ENCODE measurements at regions of chr2 and their contacts with region 1.

Region 1: DNA sequence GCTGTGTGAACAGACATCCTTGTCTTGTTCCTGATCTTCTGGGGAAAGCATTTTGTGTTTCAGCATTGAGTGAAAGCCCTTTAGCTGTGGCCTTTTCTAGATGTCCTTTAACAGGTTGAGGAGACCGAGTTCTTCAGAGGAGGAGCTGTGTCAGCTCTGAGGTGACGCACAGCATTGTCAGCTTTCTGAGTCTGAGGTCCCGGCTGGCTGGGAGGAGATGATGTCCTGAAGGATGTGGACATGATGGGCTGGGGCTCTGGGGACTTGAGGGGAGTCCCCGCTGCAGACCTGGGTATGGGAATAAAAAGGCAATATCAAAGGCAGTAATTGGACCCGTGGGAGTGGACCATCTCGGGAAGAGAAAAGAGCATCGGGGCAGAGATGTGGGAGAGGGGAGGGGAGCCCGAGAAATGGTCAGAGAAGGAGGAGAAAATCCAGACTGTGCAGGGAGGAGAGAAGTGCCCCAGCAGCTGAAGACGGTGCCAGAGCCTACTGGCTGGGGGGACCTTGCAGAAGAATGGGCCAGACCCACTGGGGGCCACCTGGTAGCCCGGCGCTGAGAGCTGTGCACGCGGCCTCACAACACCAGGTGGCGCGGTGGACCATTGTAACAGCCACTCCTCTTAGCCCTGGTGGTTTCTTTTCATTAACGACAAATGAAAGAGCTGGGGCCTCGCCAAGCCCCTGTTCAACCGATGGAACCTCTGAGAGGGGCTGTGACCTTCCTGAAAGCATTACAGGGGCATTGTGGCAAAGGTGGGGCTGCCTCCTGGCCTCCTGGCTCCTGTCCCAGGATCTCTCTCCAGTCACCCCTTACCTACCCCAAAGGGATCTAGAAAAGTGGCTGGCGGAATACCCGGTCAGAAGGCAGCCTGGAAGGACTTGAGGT is 61.6 kb downstream of the ST3GAL5 start:
- DNase-seq: no peak
- ATAC-seq: peak; percentile 98
- H3K4me3 ChIP-seq: no peak overlapping the region
- H3K27ac ChIP-seq: no peak overlapping the region
- H3K4me1 ChIP-seq: no peaks in the 10 kb centered on the region
- H3K27me3 ChIP-seq: no peaks in the 10 kb centered on the region; a peak in 1 of 4 replicates
- CTCF ChIP-seq: peak; percentile 77 to 89 (median 88); a peak in 5 of 6 replicates
- EP300 ChIP-seq: no peak
- POLR2A ChIP-seq: no peak
- RAD21 ChIP-seq: peak; percentile 85

Region 2: GRCh38 chr2:85437488-85438284 is 389.5 kb before region 1 on chr2:
- CTCF ChIA-PET with region 1: no interaction called
- POLR2A ChIA-PET with region 1: no interaction called
- RAD21 ChIA-PET with region 1: no interaction called
- SMC1A ChIA-PET with region 1: no interaction called
- in situ Hi-C with region 1: no loop called
- intact Hi-C with region 1: no loop called
- DNase-seq: no peak
- ATAC-seq: peak; percentile 94
- H3K4me3 ChIP-seq: peak overlapping the region; percentile 57; the same call in 1 of the 2 replicates
- H3K27ac ChIP-seq: no peak overlapping the region
- H3K4me1 ChIP-seq: peaks cover 8% of the 10 kb centered on the region; the same call in 1 of the 2 replicates
- H3K27me3 ChIP-seq: no peaks in the 10 kb centered on the region
- CTCF ChIP-seq: no peak
- EP300 ChIP-seq: peak in 1 of 2 experiments; percentile 21; a peak in 1 of 4 replicates
- POLR2A ChIP-seq: peak; percentile 88
- RAD21 ChIP-seq: no peak

Region 3: DNA sequence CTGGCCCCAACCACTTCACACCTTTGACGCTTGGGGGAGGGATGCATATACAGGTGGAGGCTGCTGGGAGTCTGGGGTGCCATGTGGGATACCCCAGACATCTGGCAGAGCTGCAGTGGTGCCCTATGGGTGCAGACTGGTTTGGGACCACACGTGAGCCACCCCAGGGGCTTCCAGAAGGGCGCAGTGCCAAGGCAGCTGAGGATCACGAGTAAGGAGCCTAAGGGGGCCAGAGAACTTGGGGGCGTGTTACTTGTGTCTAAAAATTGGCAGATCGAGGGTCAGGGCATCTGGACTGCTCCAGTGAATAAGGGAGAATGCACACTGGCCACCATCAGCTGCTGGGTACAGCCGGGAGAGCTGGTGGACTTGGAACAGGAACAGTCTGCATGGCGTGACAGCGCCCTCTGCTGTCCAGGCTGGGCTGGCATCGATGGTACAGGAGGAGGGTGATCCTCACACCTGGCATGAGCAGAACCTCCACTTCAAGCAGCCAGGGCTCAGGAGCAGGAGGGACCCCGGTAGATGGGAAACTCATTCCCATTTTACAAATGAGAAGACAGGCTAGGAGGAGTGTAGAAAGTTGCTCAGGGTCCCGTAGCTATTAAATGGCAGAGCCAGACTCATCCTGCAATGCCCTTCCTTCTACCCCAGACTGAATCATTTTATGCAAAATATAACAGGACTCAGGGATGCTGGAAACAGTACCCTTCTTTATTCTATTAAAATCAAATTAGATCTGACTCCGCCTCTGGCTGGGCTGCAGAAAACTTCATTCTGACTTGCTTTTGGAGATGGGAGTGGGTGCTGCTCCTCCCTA is 13.0 kb before region 1 on chr2:
- CTCF ChIA-PET with region 1: interaction called, 20 read pairs
- POLR2A ChIA-PET with region 1: no interaction called
- RAD21 ChIA-PET with region 1: interaction called, 9 read pairs
- SMC1A ChIA-PET with region 1: interaction called, 11 read pairs
- in situ Hi-C with region 1: no loop called
- intact Hi-C with region 1: no loop called
- DNase-seq: peak; percentile 30
- ATAC-seq: peak; percentile 99
- H3K4me3 ChIP-seq: no peak overlapping the region
- H3K27ac ChIP-seq: no peak overlapping the region
- H3K4me1 ChIP-seq: no peaks in the 10 kb centered on the region
- H3K27me3 ChIP-seq: no peaks in the 10 kb centered on the region
- CTCF ChIP-seq: peak; percentile 94 to 98 (median 95); a peak in 5 of 6 replicates
- EP300 ChIP-seq: no peak
- POLR2A ChIP-seq: no peak
- RAD21 ChIP-seq: peak; percentile 94

Region 4: DNA sequence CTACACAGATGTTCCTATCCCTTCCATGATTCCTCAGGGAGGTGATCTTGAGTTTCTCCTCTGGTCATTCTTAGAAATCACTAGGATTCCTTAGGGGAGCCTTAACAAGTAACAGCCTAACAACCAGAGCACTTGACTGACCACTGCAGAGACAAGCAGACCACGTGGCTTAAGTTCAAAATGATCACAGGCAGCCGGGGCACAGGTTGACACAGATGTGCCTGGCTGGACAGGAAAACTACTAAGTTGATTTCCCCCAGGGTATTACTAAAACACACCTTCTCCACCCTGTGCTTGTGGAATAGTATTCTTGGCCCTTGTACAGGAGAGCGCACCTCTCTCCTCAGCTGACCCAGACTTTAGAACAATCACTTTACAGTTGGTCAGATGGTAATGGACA is 31.6 kb after region 1 on chr2:
- CTCF ChIA-PET with region 1: interaction called, 24 read pairs
- POLR2A ChIA-PET with region 1: interaction called, 4 read pairs
- RAD21 ChIA-PET with region 1: interaction called, 14 read pairs
- SMC1A ChIA-PET with region 1: interaction called, 90 read pairs
- in situ Hi-C with region 1: no loop called
- intact Hi-C with region 1: loop called (anchors 2 kb)
- DNase-seq: no peak
- ATAC-seq: no peak
- H3K4me3 ChIP-seq: no peak overlapping the region
- H3K27ac ChIP-seq: no peak overlapping the region
- H3K4me1 ChIP-seq: peaks cover 22% of the 10 kb centered on the region
- H3K27me3 ChIP-seq: peaks cover 0 to 3% of the 10 kb centered on the region in 2 experiments; a peak in 1 of 4 replicates
- CTCF ChIP-seq: no peak
- EP300 ChIP-seq: no peak
- POLR2A ChIP-seq: no peak
- RAD21 ChIP-seq: no peak

Region 5: GRCh38 chr2:85999061-85999831 is 172.0 kb after region 1 on chr2:
- CTCF ChIA-PET with region 1: interaction called, 12 read pairs
- POLR2A ChIA-PET with region 1: interaction called, 3 read pairs
- RAD21 ChIA-PET with region 1: interaction called, 13 read pairs
- SMC1A ChIA-PET with region 1: interaction called, 27 read pairs
- in situ Hi-C with region 1: no loop called
- intact Hi-C with region 1: loop called (anchors 5 kb)
- DNase-seq: peak; percentile 77
- ATAC-seq: peak; percentile 87
- H3K4me3 ChIP-seq: peak overlapping the region; percentile 10; the same call in 1 of the 2 replicates
- H3K27ac ChIP-seq: peak overlapping the region; percentile 93
- H3K4me1 ChIP-seq: peaks cover 63% of the 10 kb centered on the region
- H3K27me3 ChIP-seq: no peaks in the 10 kb centered on the region
- CTCF ChIP-seq: no peak
- EP300 ChIP-seq: no peak
- POLR2A ChIP-seq: peak; percentile 64
- RAD21 ChIP-seq: no peak

Region 6: GRCh38 chr2:86035883-86036668 is 208.8 kb after region 1 on chr2:
- CTCF ChIA-PET with region 1: interaction called, 38 read pairs
- POLR2A ChIA-PET with region 1: interaction called, 11 read pairs
- RAD21 ChIA-PET with region 1: interaction called, 47 read pairs
- SMC1A ChIA-PET with region 1: interaction called, 78 read pairs
- in situ Hi-C with region 1: no loop called
- intact Hi-C with region 1: loop called (anchors 1 kb)
- DNase-seq: peak; percentile 71
- ATAC-seq: peak; percentile 92
- H3K4me3 ChIP-seq: peak overlapping the region; percentile 49; the same call in 1 of the 2 replicates
- H3K27ac ChIP-seq: peak overlapping the region; percentile 76
- H3K4me1 ChIP-seq: peaks cover 37% of the 10 kb centered on the region
- H3K27me3 ChIP-seq: no peaks in the 10 kb centered on the region
- CTCF ChIP-seq: peak; percentile 39 to 56 (median 49); a peak in 5 of 6 replicates
- EP300 ChIP-seq: peak; percentile 51 to 70
- POLR2A ChIP-seq: no peak; the same call in 1 of the 2 replicates
- RAD21 ChIP-seq: peak; percentile 66; the same call in 1 of the 2 replicates

Measured in GM12878 (cell line).